ENCODE measurements at regions of chr11 and their contacts with region 1.

Region 1: GRCh38 chr11:103091801-103092524 is at the start of gene DCUN1D5:
- DNase-seq: peak; percentile 91 to 97
- ATAC-seq: peak; percentile 97 to 98 (median 97)
- H3K4me3 ChIP-seq: peak within 1 kb of the TSS; percentile 65
- H3K4me3 Mint-ChIP-seq: peak within 1 kb of the TSS; percentile 92
- H3K27ac ChIP-seq: peak within 1 kb of the TSS; percentile 86
- H3K27ac Mint-ChIP-seq: peak within 1 kb of the TSS; percentile 90 to 91
- H3K4me1 ChIP-seq: peaks cover 18% of the 10 kb centered on the region
- H3K4me1 Mint-ChIP-seq: peaks cover 18 to 24% of the 10 kb centered on the region in 2 donors
- H3K27me3 ChIP-seq: peaks cover 9% of the 10 kb centered on the region
- H3K27me3 Mint-ChIP-seq: peaks cover 29 to 41% of the 10 kb centered on the region in 2 donors
- CTCF ChIP-seq: no peak
- total RNA-seq, gene DCUN1D5: 11.2 to 16.8 (median 15.2) TPM

Region 2: GRCh38 chr11:103070142-103070541 is 21.8 kb before region 1 on chr11:
- intact Hi-C with region 1: no loop called
- DNase-seq: peak in 1 of 2 donors; percentile 11
- ATAC-seq: peak; percentile 64 to 82 (median 67)
- H3K4me3 ChIP-seq: no peak overlapping the region
- H3K4me3 Mint-ChIP-seq: peak overlapping the region; percentile 69
- H3K27ac ChIP-seq: peak overlapping the region; percentile 38
- H3K27ac Mint-ChIP-seq: peak overlapping the region; percentile 82 to 84
- H3K4me1 ChIP-seq: peaks cover 4% of the 10 kb centered on the region
- H3K4me1 Mint-ChIP-seq: peaks cover 37 to 44% of the 10 kb centered on the region in 2 donors
- H3K27me3 ChIP-seq: no peaks in the 10 kb centered on the region
- H3K27me3 Mint-ChIP-seq: no peaks in the 10 kb centered on the region
- CTCF ChIP-seq: no peak

Region 3: DNA sequence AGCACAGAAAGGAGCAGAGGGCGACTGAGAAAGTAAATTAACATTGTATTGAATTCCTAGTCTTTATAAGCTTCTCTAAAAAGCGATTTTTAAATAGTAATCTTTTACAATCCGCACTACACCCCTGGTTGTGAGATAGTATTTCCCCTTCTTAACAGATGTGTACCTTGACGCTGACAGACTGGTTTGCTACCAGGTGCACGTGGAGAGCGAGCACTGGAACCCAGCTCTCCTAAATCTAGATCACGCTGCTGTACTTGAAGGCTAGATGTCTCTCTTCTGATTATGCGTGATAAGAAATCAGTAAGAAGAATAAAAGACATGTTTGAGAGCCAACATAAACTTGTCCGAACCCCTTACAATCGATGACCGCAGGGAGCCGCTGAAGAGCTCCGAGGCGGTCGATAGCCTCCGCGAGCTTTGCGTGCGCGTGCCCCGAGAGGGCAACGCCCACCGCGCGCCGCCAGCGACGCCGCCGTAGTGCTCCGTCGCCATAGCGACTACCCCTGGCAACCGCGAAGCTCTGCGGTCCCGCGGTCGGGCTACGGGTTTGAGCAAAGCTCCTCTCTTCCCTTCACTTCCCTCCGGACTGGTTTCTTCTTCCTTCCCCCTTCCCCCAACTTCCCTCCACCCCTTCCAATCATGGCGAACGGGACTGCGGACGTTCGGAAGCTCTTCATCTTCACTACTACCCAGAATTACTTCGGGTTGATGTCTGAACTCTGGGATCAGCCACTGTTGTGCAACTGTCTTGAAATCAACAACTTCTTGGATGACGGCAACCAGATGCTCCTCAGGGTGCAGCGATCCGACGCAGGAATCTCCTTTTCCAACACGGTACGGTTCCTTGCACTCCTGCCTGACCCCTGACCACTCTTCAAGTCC is 17.2 kb after region 1 on chr11 and contains the start of gene DYNC2H1:
- intact Hi-C with region 1: loop called (anchors 1 kb)
- DNase-seq: peak; percentile 84 to 95
- ATAC-seq: peak; percentile 95 to 98 (median 97)
- H3K4me3 ChIP-seq: peak within 1 kb of the TSS; percentile 56
- H3K4me3 Mint-ChIP-seq: peak within 1 kb of the TSS; percentile 95
- H3K27ac ChIP-seq: peak within 1 kb of the TSS; percentile 58
- H3K27ac Mint-ChIP-seq: peak within 1 kb of the TSS; percentile 85 to 99
- H3K4me1 ChIP-seq: peaks cover 11% of the 10 kb centered on the region
- H3K4me1 Mint-ChIP-seq: peaks cover 13 to 17% of the 10 kb centered on the region in 2 donors
- H3K27me3 ChIP-seq: peaks cover 10% of the 10 kb centered on the region
- H3K27me3 Mint-ChIP-seq: peaks cover 6 to 19% of the 10 kb centered on the region in 2 donors
- CTCF ChIP-seq: peak; percentile 47
- total RNA-seq, gene DYNC2H1: 4.1 to 7.5 (median 4.4) TPM

Region 4: GRCh38 chr11:103875855-103876510 is 784.0 kb after region 1 on chr11:
- intact Hi-C with region 1: no loop called
- DNase-seq: no peak
- ATAC-seq: peak in 1 of 3 donors; percentile 34
- H3K4me3 ChIP-seq: no peak overlapping the region
- H3K4me3 Mint-ChIP-seq: no peak overlapping the region
- H3K27ac ChIP-seq: no peak overlapping the region
- H3K27ac Mint-ChIP-seq: peak overlapping the region in 1 of 2 donors; percentile 53
- H3K4me1 ChIP-seq: peaks cover 6% of the 10 kb centered on the region
- H3K4me1 Mint-ChIP-seq: peaks cover 29 to 34% of the 10 kb centered on the region in 2 donors
- H3K27me3 ChIP-seq: no peaks in the 10 kb centered on the region
- H3K27me3 Mint-ChIP-seq: no peaks in the 10 kb centered on the region
- CTCF ChIP-seq: no peak

Region 5: GRCh38 chr11:104120493-104121137 is 1028.7 kb after region 1 on chr11:
- intact Hi-C with region 1: no loop called
- DNase-seq: no peak
- ATAC-seq: peak; percentile 31 to 58 (median 48)
- H3K4me3 ChIP-seq: no peak overlapping the region
- H3K4me3 Mint-ChIP-seq: no peak overlapping the region
- H3K27ac ChIP-seq: no peak overlapping the region
- H3K27ac Mint-ChIP-seq: peak overlapping the region; percentile 19 to 39
- H3K4me1 ChIP-seq: no peaks in the 10 kb centered on the region
- H3K4me1 Mint-ChIP-seq: peaks cover 47 to 53% of the 10 kb centered on the region in 2 donors
- H3K27me3 ChIP-seq: no peaks in the 10 kb centered on the region
- H3K27me3 Mint-ChIP-seq: no peaks in the 10 kb centered on the region
- CTCF ChIP-seq: no peak